IMR-90 (cell line): ENCODE measurements at regions of chr20 and their contacts with region 1.

Region 1: GRCh38 chr20:330233-331149 is 5.1 kb downstream of the SOX12 start:
- DNase-seq: peak; percentile 66
- ATAC-seq: peak; percentile 30
- H3K4me3 ChIP-seq: no peak overlapping the region
- H3K27ac ChIP-seq: no peak overlapping the region
- H3K4me1 ChIP-seq: peaks cover 14% of the 10 kb centered on the region
- H3K27me3 ChIP-seq: no peaks in the 10 kb centered on the region
- CTCF ChIP-seq: peak; percentile 90
- POLR2A ChIP-seq: peak; percentile 27; the same call in 1 of the 2 replicates
- RAD21 ChIP-seq: peak; percentile 94

Region 2: GRCh38 chr20:208942-209566 is 121.4 kb before region 1 on chr20:
- CTCF ChIA-PET with region 1: interaction called, 4 read pairs
- POLR2A ChIA-PET with region 1: interaction called, 13 read pairs
- dilution Hi-C with region 1: no loop called
- in situ Hi-C with region 1: loop called (anchors 10 kb)
- intact Hi-C with region 1: loop called (anchors 1 kb)
- DNase-seq: peak; percentile 79
- ATAC-seq: peak; percentile 98
- H3K4me3 ChIP-seq: no peak overlapping the region
- H3K27ac ChIP-seq: no peak overlapping the region
- H3K4me1 ChIP-seq: no peaks in the 10 kb centered on the region
- H3K27me3 ChIP-seq: peaks cover 10% of the 10 kb centered on the region
- CTCF ChIP-seq: peak; percentile 70
- POLR2A ChIP-seq: no peak
- RAD21 ChIP-seq: peak; percentile 71

Region 3: GRCh38 chr20:219290-220115 is 111.0 kb before region 1 on chr20:
- CTCF ChIA-PET with region 1: interaction called, 5 read pairs
- POLR2A ChIA-PET with region 1: no interaction called
- dilution Hi-C with region 1: no loop called
- in situ Hi-C with region 1: loop called (anchors 10 kb)
- intact Hi-C with region 1: no loop called
- DNase-seq: peak; percentile 7
- ATAC-seq: peak; percentile 75
- H3K4me3 ChIP-seq: no peak overlapping the region
- H3K27ac ChIP-seq: no peak overlapping the region
- H3K4me1 ChIP-seq: no peaks in the 10 kb centered on the region
- H3K27me3 ChIP-seq: peaks cover 3% of the 10 kb centered on the region
- CTCF ChIP-seq: peak; percentile 43
- POLR2A ChIP-seq: no peak
- RAD21 ChIP-seq: peak; percentile 43

Region 4: GRCh38 chr20:258963-259362 is 71.5 kb before region 1 on chr20:
- CTCF ChIA-PET with region 1: no interaction called
- POLR2A ChIA-PET with region 1: interaction called, 12 read pairs
- dilution Hi-C with region 1: no loop called
- in situ Hi-C with region 1: no loop called
- intact Hi-C with region 1: no loop called
- DNase-seq: peak; percentile 16
- ATAC-seq: peak; percentile 40; the same call in 1 of the 2 replicates
- H3K4me3 ChIP-seq: no peak overlapping the region
- H3K27ac ChIP-seq: no peak overlapping the region
- H3K4me1 ChIP-seq: no peaks in the 10 kb centered on the region
- H3K27me3 ChIP-seq: peaks cover 19% of the 10 kb centered on the region
- CTCF ChIP-seq: 0 out of 2 replicates have a peak, but pooled peaks have one; percentile 25
- POLR2A ChIP-seq: no peak
- RAD21 ChIP-seq: peak; percentile 28; the same call in 1 of the 2 replicates

Region 5: GRCh38 chr20:266596-267562 is 63.6 kb before region 1 on chr20:
- CTCF ChIA-PET with region 1: interaction called, 5 read pairs
- POLR2A ChIA-PET with region 1: no interaction called
- dilution Hi-C with region 1: no loop called
- in situ Hi-C with region 1: no loop called
- intact Hi-C with region 1: loop called (anchors 2 kb)
- DNase-seq: peak; percentile 62
- ATAC-seq: peak; percentile 98
- H3K4me3 ChIP-seq: peak overlapping the region; percentile 50
- H3K27ac ChIP-seq: no peak overlapping the region
- H3K4me1 ChIP-seq: no peaks in the 10 kb centered on the region
- H3K27me3 ChIP-seq: peaks cover 10% of the 10 kb centered on the region; the same call in 1 of the 2 replicates
- CTCF ChIP-seq: peak; percentile 89
- POLR2A ChIP-seq: no peak
- RAD21 ChIP-seq: peak; percentile 82

Region 6: DNA sequence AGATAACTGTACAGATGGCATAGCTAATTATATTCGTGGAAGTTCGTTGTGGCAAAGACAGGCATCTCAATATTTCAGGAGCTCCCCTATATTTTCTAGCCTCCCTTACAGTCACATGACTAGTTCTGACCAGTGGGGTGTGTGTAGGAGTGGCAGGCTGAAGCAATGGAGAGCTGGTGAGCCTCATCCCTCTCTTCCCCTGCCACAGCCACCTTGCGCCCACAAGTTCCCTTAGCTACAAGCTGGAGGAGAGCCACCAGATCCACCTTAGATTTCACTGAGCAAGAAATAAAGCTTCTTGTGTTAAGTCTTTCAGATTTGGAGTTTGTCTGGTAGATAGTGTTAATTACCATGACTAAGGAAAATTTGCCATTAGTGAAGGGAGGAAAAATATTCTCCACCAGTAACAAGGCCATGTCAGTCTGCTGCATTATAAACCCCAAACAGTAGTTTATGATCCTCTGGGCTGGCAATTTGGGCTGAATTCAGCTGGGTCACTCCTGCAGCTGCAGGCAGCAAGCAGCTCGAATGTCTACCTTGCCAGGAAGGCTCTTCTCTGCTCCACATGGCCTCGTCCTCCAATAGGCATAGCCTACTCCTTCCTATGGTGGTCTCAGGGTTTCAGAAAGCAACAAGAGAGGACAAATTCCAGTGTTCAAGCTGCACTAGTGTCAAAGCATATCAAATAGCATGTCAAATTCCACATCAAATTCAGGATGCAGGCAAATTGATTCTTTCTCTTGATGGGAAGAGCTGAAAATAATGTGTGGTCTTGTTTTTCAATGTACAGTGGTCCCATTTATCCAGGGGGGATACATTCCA is 70.2 kb after region 1 on chr20:
- CTCF ChIA-PET with region 1: no interaction called
- POLR2A ChIA-PET with region 1: interaction called, 12 read pairs
- dilution Hi-C with region 1: no loop called
- in situ Hi-C with region 1: no loop called
- intact Hi-C with region 1: no loop called
- DNase-seq: no peak
- ATAC-seq: peak; percentile 61
- H3K4me3 ChIP-seq: no peak overlapping the region
- H3K27ac ChIP-seq: no peak overlapping the region
- H3K4me1 ChIP-seq: peaks cover 4% of the 10 kb centered on the region; the same call in 1 of the 2 replicates
- H3K27me3 ChIP-seq: no peaks in the 10 kb centered on the region
- CTCF ChIP-seq: no peak
- POLR2A ChIP-seq: no peak
- RAD21 ChIP-seq: no peak

Region 7: DNA sequence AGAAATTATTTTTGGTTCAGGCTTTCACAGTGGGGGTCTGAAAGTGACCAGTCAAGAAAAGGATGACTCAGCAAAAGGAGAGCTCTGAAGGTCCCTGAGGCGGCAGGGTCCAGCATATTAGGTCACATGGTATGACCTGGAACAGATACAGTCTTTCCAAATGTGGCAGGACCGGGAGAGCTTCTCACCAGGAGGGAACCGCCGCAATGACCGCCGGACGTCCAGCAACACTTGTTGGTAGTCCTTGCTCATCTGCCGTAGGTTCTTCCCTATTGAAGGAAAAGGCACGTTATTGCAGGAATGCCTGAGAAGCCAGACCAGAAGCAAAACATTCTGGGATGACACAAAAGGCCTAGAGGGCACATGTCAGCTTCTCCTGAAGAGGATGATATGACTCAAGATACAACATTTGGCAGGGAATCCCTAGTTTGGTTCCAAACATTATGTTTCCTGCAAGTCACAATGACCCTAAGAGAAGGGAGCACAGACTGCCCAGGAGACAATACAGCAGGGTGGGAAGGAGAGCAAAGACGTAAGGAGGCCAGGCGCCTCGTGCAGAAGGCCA is 114.5 kb after region 1 on chr20:
- CTCF ChIA-PET with region 1: no interaction called
- POLR2A ChIA-PET with region 1: no interaction called
- dilution Hi-C with region 1: no loop called
- in situ Hi-C with region 1: no loop called
- intact Hi-C with region 1: no loop called
- DNase-seq: peak; percentile 60
- ATAC-seq: peak; percentile 72
- H3K4me3 ChIP-seq: no peak overlapping the region
- H3K27ac ChIP-seq: peak overlapping the region; percentile 10; the same call in 1 of the 2 replicates
- H3K4me1 ChIP-seq: peaks cover 5% of the 10 kb centered on the region
- H3K27me3 ChIP-seq: no peaks in the 10 kb centered on the region
- CTCF ChIP-seq: no peak
- POLR2A ChIP-seq: no peak
- RAD21 ChIP-seq: no peak